Activated CD4-positive, alpha-beta T cell treated with anti-CD3 and anti-CD28 coated beads, Interleukin-2, amount 10 ng/mL, durations not matched to agents 24 days and 14 days (primary cell): ENCODE measurements at regions of chr14 and their contacts with region 1.

Region 1: GRCh38 chr14:65915125-65915524 is 502.6 kb downstream of the FUT8 start:
- DNase-seq: no peak
- H3K4me3 Mint-ChIP-seq: no peak overlapping the region
- H3K27ac Mint-ChIP-seq: no peak overlapping the region
- H3K4me1 Mint-ChIP-seq: peaks cover 33% of the 10 kb centered on the region
- H3K27me3 Mint-ChIP-seq: peaks cover 3% of the 10 kb centered on the region

Region 2: DNA sequence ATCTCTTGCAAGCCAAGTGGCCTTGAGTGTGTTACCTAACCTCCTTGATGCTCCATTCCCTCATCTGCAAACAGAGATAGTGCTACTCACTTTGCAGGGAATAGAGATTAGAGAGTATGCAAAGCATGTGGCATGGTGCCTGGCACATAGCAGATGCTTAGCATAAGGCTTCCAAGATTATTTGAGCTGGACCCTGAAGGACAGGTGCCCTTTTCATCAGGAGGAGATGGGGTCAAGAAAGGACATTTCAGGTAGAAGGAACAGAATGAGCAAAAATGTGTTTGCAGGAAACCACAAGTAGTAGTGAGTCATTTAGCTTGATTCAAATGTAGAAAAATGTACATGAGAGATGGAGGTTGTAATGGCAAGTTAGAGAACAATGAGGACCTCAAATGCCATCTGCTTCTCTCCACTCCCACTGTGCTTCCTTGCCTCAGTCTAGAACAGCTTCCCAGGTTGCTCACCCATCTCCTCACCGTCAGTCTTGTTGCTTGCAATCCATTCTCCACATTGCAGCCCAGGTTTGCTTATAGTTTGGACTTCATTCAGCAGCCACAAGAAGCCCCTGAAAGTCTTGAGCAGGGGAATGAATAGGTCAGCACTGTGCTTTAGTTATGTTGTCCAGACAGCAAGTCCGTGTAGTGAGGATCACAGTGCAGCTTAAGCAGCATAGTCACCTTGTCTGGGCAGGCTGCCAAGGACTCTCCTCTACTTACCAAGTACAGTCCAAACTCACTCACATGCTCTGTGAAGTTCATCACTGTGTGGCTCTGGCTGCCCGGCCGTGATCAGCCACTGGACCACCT is 34.8 kb after region 1 on chr14:
- intact Hi-C with region 1: loop called (anchors 5 kb)
- DNase-seq: peak; percentile 71
- H3K4me3 Mint-ChIP-seq: peak overlapping the region; percentile 14
- H3K27ac Mint-ChIP-seq: peak overlapping the region; percentile 82
- H3K4me1 Mint-ChIP-seq: peaks cover 40% of the 10 kb centered on the region
- H3K27me3 Mint-ChIP-seq: peaks cover 9% of the 10 kb centered on the region